IMR-90 (cell line): ENCODE measurements at regions of chr3 and their contacts with region 1.

Region 1: GRCh38 chr3:48847504-48848423 is at the start of gene PRKAR2A:
- DNase-seq: peak; percentile 83
- ATAC-seq: peak; percentile 90
- H3K4me3 ChIP-seq: peak within 1 kb of the TSS; percentile 87
- H3K27ac ChIP-seq: peak within 1 kb of the TSS; percentile 67
- H3K4me1 ChIP-seq: peaks cover 5% of the 10 kb centered on the region
- H3K27me3 ChIP-seq: no peaks in the 10 kb centered on the region
- CTCF ChIP-seq: no peak
- POLR2A ChIP-seq: peak; percentile 61
- RAD21 ChIP-seq: no peak
- total RNA-seq, gene PRKAR2A: 48.2 and 53.0 TPM in 2 replicates

Region 2: GRCh38 chr3:48826451-48826850 is 21.3 kb before region 1 on chr3:
- CTCF ChIA-PET with region 1: no interaction called
- POLR2A ChIA-PET with region 1: no interaction called
- dilution Hi-C with region 1: no loop called
- in situ Hi-C with region 1: no loop called
- intact Hi-C with region 1: loop called (anchors 2 kb)
- DNase-seq: peak; percentile 96
- ATAC-seq: peak; percentile 99
- H3K4me3 ChIP-seq: no peak overlapping the region
- H3K27ac ChIP-seq: peak overlapping the region; percentile 36; the same call in 1 of the 2 replicates
- H3K4me1 ChIP-seq: peaks cover 5% of the 10 kb centered on the region; the same call in 1 of the 2 replicates
- H3K27me3 ChIP-seq: no peaks in the 10 kb centered on the region
- CTCF ChIP-seq: no peak
- POLR2A ChIP-seq: no peak
- RAD21 ChIP-seq: no peak

Region 3: DNA sequence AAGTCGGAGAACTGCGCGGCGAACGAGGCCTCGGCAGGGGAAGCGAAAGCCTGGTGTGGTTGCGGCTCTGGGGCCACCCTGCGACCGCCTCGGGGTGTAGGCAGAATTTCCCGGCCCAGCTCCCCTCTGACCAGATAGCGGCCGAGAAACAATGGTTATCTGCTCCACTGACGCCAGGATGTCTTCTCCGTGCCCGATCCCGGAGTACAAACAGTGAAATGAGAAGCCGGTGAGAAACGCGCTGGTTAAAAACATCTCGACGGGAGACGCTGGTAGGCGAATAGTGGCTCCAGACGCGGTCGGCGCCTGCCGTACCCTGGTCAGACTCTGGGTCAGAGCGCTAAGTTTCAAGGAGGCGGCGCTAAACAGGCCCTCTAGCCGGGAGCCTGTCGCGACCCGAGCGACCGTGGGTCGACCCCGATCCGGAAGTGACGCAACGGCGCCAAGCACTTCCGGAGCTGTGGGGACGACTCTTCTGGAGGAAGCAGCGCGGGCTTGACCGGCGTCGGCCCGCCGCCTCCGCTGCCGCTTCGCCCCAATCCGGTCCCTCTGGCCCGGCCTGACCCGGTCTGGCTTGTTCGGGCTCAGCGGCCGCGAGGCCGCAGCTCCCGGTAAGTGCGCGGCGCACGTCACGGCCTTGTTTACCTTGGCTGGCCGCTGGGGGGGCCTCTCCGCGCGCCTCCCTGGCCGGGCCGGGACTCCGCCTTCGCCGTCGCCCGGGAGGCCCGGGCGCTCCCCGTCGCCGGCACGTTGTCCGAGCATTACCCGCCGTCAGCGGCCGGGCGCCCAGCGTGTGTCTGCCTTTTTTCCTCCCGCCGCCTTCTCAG is 70.8 kb after region 1 on chr3 and contains the start of gene ARIH2:
- CTCF ChIA-PET with region 1: no interaction called
- POLR2A ChIA-PET with region 1: no interaction called
- dilution Hi-C with region 1: no loop called
- in situ Hi-C with region 1: no loop called
- intact Hi-C with region 1: loop called (anchors 5 kb)
- DNase-seq: peak; percentile 91
- ATAC-seq: peak; percentile 92
- H3K4me3 ChIP-seq: peak within 1 kb of the TSS; percentile 70
- H3K27ac ChIP-seq: peak within 1 kb of the TSS; percentile 94
- H3K4me1 ChIP-seq: peaks cover 7% of the 10 kb centered on the region
- H3K27me3 ChIP-seq: no peaks in the 10 kb centered on the region
- CTCF ChIP-seq: no peak
- POLR2A ChIP-seq: peak; percentile 87
- RAD21 ChIP-seq: peak; percentile 12; the same call in 1 of the 2 replicates
- total RNA-seq, gene ARIH2: 73.0 and 93.7 TPM in 2 replicates

Region 4: DNA sequence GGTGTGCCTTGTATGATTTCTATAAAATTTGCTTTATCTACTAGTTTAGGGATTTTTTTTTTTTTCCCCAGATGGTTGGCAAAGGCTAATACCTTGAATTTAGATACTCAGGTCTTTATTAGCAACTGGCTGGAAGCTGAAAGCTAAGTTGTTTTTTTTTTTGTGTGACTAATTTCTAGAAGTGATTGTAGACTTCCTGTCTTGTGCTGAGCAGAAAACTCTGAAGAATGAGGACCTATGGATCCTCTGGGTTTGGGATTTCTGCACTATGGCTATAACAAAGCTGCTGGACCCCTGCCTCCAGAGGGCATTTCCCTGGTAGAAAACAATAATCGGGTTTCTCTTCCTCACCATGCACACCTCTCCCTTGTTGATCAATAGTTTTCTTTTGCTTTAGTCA is 80.9 kb after region 1 on chr3:
- CTCF ChIA-PET with region 1: no interaction called
- POLR2A ChIA-PET with region 1: no interaction called
- dilution Hi-C with region 1: no loop called
- in situ Hi-C with region 1: no loop called
- intact Hi-C with region 1: no loop called
- DNase-seq: peak; percentile 38
- ATAC-seq: no peak
- H3K4me3 ChIP-seq: no peak overlapping the region
- H3K27ac ChIP-seq: no peak overlapping the region
- H3K4me1 ChIP-seq: peaks cover 6% of the 10 kb centered on the region
- H3K27me3 ChIP-seq: no peaks in the 10 kb centered on the region
- CTCF ChIP-seq: no peak
- POLR2A ChIP-seq: no peak
- RAD21 ChIP-seq: no peak

Region 5: GRCh38 chr3:49093853-49094767 is 246.3 kb after region 1 on chr3 and contains the start of gene QRICH1:
- CTCF ChIA-PET with region 1: no interaction called
- POLR2A ChIA-PET with region 1: no interaction called
- dilution Hi-C with region 1: no loop called
- in situ Hi-C with region 1: no loop called
- intact Hi-C with region 1: loop called (anchors 5 kb)
- DNase-seq: peak; percentile 97
- ATAC-seq: peak; percentile 87
- H3K4me3 ChIP-seq: peak within 1 kb of the TSS; percentile 85
- H3K27ac ChIP-seq: peak within 1 kb of the TSS; percentile 82
- H3K4me1 ChIP-seq: peaks cover 2% of the 10 kb centered on the region; the same call in 1 of the 2 replicates
- H3K27me3 ChIP-seq: no peaks in the 10 kb centered on the region
- CTCF ChIP-seq: peak; percentile 71
- POLR2A ChIP-seq: peak; percentile 96
- RAD21 ChIP-seq: peak; percentile 68
- total RNA-seq, gene QRICH1: 62.7 and 72.2 TPM in 2 replicates

Region 6: DNA sequence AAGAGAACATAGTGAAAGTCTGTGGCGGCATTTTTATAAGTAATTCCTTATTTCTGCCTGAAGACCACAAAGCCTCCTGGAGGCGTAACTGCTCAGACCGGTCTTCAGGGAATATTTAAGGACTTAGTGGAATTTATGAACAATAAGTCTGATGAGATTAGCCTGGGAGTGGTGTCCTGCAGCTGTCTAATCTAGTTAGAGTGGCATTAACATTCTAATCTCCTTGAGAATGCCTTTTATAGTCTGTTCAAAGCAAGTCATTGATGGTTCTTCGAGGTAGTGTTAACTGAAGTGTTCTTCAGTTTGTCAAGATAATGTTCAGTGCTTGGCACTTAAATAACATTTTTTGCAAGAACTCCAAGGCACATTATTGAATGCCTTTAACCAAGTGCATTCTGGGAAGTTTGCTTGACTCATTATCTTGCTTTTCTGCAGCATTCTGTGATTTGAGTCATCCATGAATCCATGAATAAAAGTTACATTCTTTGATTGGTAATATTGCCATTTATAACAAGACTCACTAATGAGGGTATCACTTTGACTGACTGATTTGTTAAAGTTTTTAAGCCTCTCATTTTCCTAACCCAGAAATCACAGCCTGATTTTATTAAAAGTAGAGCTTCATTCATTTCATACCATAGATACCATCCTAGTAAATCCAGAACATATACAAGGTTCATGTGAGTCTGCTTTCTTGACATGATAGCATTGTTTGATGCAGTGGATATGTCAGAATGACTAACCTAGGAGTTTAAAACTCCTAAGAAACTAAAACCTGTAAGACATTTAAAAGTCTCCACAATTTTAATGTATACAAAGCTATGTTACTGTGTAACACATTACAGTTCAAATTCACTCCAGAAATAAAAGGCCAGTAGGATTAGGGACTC is 1253.4 kb after region 1 on chr3:
- CTCF ChIA-PET with region 1: no interaction called
- POLR2A ChIA-PET with region 1: no interaction called
- dilution Hi-C with region 1: no loop called
- in situ Hi-C with region 1: no loop called
- intact Hi-C with region 1: loop called (anchors 10 kb)
- DNase-seq: peak; percentile 66
- ATAC-seq: peak; percentile 65
- H3K4me3 ChIP-seq: no peak overlapping the region
- H3K27ac ChIP-seq: no peak overlapping the region
- H3K4me1 ChIP-seq: no peaks in the 10 kb centered on the region
- H3K27me3 ChIP-seq: no peaks in the 10 kb centered on the region
- CTCF ChIP-seq: no peak
- POLR2A ChIP-seq: no peak
- RAD21 ChIP-seq: no peak